Transverse colon (tissue), 4 donors: ENCODE measurements at regions of chr11 and their contacts with region 1.

Region 1: DNA sequence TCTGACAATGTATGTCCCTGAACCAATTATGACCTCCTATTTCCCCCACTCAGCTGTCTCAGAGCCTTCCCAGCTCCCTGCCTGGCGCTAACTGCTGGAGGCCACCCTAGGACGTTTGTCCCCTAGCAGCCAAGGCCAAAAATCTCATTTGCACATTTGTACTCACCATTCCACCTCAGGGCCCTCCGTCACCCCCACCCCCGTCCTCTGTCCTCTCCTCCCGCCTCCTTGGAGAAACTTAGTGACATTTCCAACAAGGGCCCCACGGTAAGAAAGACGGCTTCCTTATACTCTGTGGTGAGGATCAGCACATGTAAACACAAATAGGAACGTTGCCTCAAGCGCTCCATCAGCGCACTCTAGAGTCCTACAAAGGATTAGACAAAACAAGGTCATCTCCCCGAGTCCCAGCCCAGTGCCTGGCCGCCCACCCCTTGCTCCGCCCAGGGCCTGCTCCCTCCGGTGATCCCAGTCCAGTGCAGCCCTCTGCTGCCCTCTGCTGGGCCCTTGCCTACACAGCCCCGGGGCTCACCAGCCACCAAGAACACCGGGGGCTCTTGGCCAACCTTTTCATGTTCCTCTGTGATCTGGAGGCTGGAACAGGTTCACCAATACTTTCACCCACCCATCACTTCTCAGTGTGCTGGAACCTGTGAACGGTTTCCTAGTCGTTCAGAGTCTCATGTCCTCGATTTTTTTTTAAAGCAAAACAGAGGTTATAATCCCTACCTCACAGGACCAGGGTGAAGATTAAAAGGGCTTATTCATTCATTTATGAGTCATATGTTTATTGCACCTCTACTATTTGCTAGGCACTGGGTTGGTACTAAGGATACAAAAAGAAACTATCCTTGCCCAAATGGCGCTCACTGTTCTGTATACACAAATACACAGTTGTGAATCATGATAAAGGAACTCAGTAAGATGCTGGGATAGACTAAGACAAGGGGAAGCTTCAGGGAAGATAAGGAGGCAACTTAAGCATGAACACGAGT is 15.3 kb upstream of the CTR9 start:
- DNase-seq: peak; percentile 94
- H3K4me3 ChIP-seq: peak overlapping the region in 2 of 4 donors; percentile 6 to 8
- H3K27ac ChIP-seq: peak overlapping the region; percentile 59 to 73 (median 67)
- H3K4me1 ChIP-seq: peaks cover 5 to 16% (median 11%) of the 10 kb centered on the region in 4 donors
- H3K27me3 ChIP-seq: no peaks in the 10 kb centered on the region
- CTCF ChIP-seq: peak; percentile 96 to 99 (median 98)
- EP300 ChIP-seq: no peak
- POLR2A ChIP-seq: no peak

Region 2: GRCh38 chr11:10205928-10206327 is 529.9 kb before region 1 on chr11:
- in situ Hi-C with region 1: no loop called
- intact Hi-C with region 1: no loop called
- DNase-seq: no peak
- H3K4me3 ChIP-seq: no peak overlapping the region
- H3K27ac ChIP-seq: no peak overlapping the region
- H3K4me1 ChIP-seq: peaks cover 0 to 4% (median 0%) of the 10 kb centered on the region in 4 donors
- H3K27me3 ChIP-seq: no peaks in the 10 kb centered on the region
- CTCF ChIP-seq: no peak
- EP300 ChIP-seq: no peak
- POLR2A ChIP-seq: no peak

Region 3: GRCh38 chr11:10405855-10406592 is 329.8 kb before region 1 on chr11:
- in situ Hi-C with region 1: loop called (anchors 5 to 10 kb)
- intact Hi-C with region 1: loop called (anchors 2 kb)
- DNase-seq: peak; percentile 58
- H3K4me3 ChIP-seq: no peak overlapping the region
- H3K27ac ChIP-seq: no peak overlapping the region
- H3K4me1 ChIP-seq: peaks cover 0 to 12% (median 2%) of the 10 kb centered on the region in 4 donors
- H3K27me3 ChIP-seq: no peaks in the 10 kb centered on the region
- CTCF ChIP-seq: peak; percentile 60 to 74 (median 69)
- EP300 ChIP-seq: no peak
- POLR2A ChIP-seq: no peak

Region 4: GRCh38 chr11:10413268-10413667 is 322.5 kb before region 1 on chr11:
- in situ Hi-C with region 1: loop called (anchors 5 to 10 kb)
- intact Hi-C with region 1: loop called (anchors 2 kb)
- DNase-seq: peak; percentile 33
- H3K4me3 ChIP-seq: no peak overlapping the region
- H3K27ac ChIP-seq: peak overlapping the region in 1 of 4 donors; percentile 54
- H3K4me1 ChIP-seq: peaks cover 0 to 18% (median 4%) of the 10 kb centered on the region in 4 donors
- H3K27me3 ChIP-seq: no peaks in the 10 kb centered on the region
- CTCF ChIP-seq: peak in 2 of 5 experiments; percentile 26 to 44
- EP300 ChIP-seq: no peak
- POLR2A ChIP-seq: no peak

Region 5: GRCh38 chr11:10540923-10541560 is 194.7 kb before region 1 on chr11 and contains the start of gene RNF141:
- in situ Hi-C with region 1: loop called in 1 of 4 experiments (anchors 25 kb)
- intact Hi-C with region 1: loop called (anchors 10 kb)
- DNase-seq: peak; percentile 97
- H3K4me3 ChIP-seq: peak within 1 kb of the TSS; percentile 61 to 89 (median 72)
- H3K27ac ChIP-seq: peak within 1 kb of the TSS; percentile 87 to 94 (median 90)
- H3K4me1 ChIP-seq: peaks cover 6 to 18% (median 9%) of the 10 kb centered on the region in 4 donors
- H3K27me3 ChIP-seq: no peaks in the 10 kb centered on the region
- CTCF ChIP-seq: peak; percentile 79 to 95 (median 84)
- EP300 ChIP-seq: no peak
- POLR2A ChIP-seq: peak; percentile 96
- total RNA-seq, gene RNF141: 13.1 to 31.4 (median 22.3) TPM

Region 6: DNA sequence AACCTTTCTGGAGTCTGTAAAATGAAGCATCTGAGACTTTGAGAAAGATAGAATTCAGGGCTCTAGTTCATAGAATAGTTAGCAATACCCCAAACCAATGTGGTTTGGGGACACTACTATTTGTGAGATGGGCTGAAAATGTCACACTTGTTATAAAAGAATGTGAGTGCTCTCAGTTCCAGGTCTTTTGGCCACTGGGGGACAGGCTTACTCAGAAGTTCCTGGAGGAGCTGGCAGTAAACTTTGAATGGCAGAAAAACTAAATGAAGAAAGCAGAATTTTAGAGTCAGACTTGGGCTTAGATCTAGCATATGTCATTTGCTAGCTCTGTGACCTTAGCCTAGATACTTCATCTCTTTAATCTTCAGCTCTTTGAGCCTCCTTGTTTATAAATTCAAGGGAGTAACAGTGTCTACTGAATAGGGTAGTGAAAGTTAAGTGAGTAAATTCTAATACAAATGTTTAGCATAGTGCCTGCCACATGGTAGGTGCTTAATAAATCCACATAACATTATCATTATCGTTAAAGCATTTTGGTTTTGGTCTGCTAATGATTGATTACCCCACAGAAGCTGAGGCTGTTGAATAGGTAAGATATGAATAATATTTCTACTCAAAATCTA is 171.0 kb before region 1 on chr11:
- in situ Hi-C with region 1: loop called in 1 of 4 experiments (anchors 25 kb)
- intact Hi-C with region 1: no loop called
- DNase-seq: no peak
- H3K4me3 ChIP-seq: no peak overlapping the region
- H3K27ac ChIP-seq: no peak overlapping the region
- H3K4me1 ChIP-seq: peaks cover 0 to 3% (median 0%) of the 10 kb centered on the region in 4 donors
- H3K27me3 ChIP-seq: no peaks in the 10 kb centered on the region
- CTCF ChIP-seq: no peak
- EP300 ChIP-seq: no peak
- POLR2A ChIP-seq: no peak